GM10248 (cell line): ENCODE measurements at regions of chr19 and their contacts with region 1.

Region 1: DNA sequence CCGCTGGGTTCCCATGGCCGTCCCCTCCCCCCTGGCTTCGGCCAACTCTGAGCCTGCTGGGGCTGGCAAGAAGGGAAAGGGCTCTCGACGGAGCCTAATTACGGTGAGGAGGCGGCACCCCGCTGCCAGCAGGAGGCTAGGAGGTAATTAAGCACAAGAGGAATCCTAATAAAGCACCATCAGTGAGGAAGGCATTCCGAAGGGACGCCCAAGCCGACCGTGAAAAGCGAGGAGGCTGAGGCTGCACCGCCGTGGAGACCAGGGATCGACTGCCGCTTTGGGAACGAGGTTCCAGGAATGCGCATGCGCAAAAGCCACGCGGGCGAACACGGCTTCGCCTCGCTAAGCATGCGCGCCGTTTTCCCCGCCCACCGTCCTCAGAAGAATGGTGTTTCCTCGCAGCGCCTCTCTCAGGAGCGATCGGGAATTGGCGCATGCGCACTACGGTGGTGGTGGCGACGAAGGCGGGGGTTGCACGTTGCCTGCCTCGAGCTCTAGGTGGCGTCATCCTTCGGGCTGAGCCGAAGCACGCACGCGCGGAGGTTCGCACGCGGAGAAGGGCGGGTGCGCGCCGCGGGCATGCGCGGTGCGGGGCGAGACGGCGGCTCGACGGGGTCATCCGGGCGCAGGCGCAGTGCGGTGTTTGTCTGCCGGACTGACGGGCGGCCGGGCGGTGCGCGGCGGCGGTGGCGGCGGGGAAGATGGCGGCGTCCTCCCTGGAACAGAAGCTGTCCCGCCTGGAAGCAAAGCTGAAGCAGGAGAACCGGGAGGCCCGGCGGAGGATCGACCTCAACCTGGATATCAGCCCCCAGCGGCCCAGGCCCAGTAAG is at the start of gene MAP2K7:
- DNase-seq: peak; percentile 100
- CTCF ChIP-seq: peak; percentile 92

Region 2: GRCh38 chr19:7888145-7888825 is 15.2 kb before region 1 on chr19 and contains the start of gene LRRC8E:
- CTCF ChIA-PET with region 1: interaction called, 11 read pairs
- POLR2A ChIA-PET with region 1: no interaction called
- DNase-seq: no peak
- CTCF ChIP-seq: no peak

Region 3: DNA sequence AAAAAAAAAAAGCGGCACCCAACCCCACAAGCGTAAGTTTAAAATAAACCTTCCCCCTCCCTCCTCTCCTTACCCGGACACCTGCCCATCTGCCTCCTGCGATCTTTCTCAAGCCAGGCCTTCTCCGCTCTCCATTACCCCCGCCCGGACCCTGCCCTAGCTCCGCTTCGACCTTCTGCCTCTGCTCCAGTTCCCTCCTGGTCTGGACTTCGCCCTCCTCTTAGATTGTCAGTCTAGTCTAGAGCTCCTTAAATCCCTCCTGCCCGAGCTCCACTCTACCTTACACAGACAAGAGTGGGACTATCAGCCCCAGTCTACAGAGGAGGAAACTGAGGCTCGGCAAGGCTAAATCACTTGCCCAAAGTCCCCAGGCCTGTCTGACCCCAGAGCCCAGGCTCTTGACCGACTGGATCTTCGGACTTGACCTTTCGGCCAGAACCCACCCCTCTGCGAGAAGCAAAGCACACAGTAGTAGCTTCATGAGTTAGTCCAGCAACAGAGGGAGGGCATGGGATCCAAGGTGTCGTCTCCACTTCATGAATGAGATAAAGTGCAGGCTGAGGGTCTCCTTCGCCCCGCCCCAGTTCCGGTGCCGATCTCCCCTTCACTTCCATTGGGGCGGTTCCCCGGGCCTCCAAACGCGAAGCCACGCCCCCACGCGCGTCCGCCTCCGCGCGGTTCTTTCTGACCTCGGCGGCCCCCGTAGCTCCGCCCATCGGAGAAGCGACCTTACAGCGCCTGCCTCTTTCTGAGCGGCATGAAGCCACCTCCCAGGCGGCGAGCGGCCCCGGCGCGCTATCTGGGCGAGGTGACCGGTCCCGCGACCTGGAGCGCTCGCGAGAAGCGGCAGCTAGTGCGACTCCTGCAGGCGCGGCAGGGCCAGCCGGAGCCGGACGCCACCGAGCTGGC is 16.4 kb after region 1 on chr19 and contains the start of gene SNAPC2:
- CTCF ChIA-PET with region 1: interaction called, 14 read pairs
- POLR2A ChIA-PET with region 1: interaction called, 11 read pairs
- DNase-seq: peak; percentile 92
- CTCF ChIP-seq: no peak

Region 4: GRCh38 chr19:7989071-7989575 is 85.7 kb after region 1 on chr19:
- CTCF ChIA-PET with region 1: no interaction called
- POLR2A ChIA-PET with region 1: no interaction called
- DNase-seq: no peak
- CTCF ChIP-seq: no peak

Region 5: GRCh38 chr19:8036434-8037099 is 133.1 kb after region 1 on chr19:
- CTCF ChIA-PET with region 1: no interaction called
- POLR2A ChIA-PET with region 1: no interaction called
- DNase-seq: no peak
- CTCF ChIP-seq: no peak